Activated T-helper 2 cell treated with anti-CD3 and anti-CD28 coated beads, Interferon-gamma antibody, Interleukin-2, Interleukin-4, amounts not matched to agents 10 μg/mL and 5 μg/mL and 100 μg/mL, durations not matched to agents 14 hours and 24 hours and 36 hours (primary cell): ENCODE measurements at regions of chr7 and their contacts with region 1.

Region 1: GRCh38 chr7:66654123-66654732 is 25.5 kb downstream of the KCTD7 start:
- DNase-seq: peak; percentile 96
- H3K4me3 Mint-ChIP-seq: peak overlapping the region; percentile 95
- H3K27ac Mint-ChIP-seq: peak overlapping the region; percentile 94
- H3K4me1 Mint-ChIP-seq: peaks cover 14% of the 10 kb centered on the region
- H3K27me3 Mint-ChIP-seq: no peaks in the 10 kb centered on the region

Region 2: GRCh38 chr7:66250711-66251110 is 403.5 kb before region 1 on chr7:
- intact Hi-C with region 1: no loop called
- DNase-seq: no peak
- H3K4me3 Mint-ChIP-seq: no peak overlapping the region
- H3K27ac Mint-ChIP-seq: no peak overlapping the region
- H3K4me1 Mint-ChIP-seq: no peaks in the 10 kb centered on the region
- H3K27me3 Mint-ChIP-seq: no peaks in the 10 kb centered on the region

Region 3: DNA sequence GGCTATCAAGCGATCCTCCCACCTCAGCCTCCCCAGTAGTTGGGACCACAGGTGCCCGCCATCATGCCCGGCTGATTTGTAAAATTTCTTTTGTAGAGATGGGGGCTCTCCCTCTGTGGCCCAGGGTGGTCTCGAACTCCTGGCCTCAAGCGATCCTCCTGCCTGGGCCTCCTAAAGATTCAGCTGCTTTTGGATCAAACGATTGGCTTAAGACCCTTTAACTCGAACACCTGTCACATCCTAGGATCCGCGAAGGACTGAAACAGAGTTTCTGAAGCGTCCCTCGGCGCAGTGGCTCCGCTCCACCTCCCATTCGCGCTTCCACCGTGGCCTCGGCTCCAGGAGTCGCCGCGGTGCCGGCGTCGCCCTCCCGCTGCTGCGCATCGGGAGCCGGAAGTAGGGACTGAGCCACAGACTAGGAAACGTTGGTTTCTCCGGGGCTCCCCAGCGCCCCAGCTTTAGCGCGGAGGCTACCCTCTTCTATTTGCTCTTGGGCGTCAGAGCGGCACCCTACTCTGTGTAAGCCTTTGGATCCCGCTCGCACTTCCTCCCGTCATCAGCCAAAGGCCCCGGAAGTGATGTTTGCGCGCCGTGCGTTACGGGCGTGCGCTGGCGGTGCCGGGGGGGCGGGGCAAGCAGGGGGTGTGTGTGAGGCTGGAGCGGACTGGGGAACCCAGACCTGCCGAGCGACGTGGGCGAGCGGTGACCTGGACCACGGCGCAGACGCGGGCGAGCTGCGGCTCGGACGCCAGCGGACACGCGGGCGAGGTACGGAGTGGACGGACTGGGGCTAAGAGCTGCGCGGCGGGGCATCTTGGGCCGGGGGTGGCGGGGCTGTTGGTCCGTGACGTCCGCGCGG is 27.5 kb after region 1 on chr7:
- intact Hi-C with region 1: loop called (anchors 1 kb)
- DNase-seq: peak; percentile 91
- H3K4me3 Mint-ChIP-seq: peak overlapping the region; percentile 90
- H3K27ac Mint-ChIP-seq: peak overlapping the region; percentile 93
- H3K4me1 Mint-ChIP-seq: peaks cover 15% of the 10 kb centered on the region
- H3K27me3 Mint-ChIP-seq: no peaks in the 10 kb centered on the region

Region 4: DNA sequence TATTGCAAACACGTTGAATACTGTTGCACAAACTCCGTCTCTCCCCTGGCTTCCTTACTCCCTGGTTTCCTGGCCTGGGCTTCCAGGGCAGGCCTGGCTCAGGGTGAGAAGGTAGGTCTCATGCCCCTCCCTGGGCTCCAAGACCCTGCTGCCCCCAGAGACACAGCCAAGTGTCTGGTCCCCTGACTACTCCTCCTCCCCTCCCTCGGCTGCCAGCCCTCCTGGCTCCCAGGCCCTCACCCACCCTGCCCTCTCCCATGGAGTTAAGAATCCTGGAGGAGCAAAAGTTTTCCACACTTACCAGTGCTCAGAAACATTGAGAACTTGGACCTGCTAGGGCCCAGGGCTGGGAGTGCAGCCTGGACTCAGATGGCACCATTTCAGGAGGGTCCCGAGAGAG is 39.1 kb after region 1 on chr7:
- intact Hi-C with region 1: no loop called
- DNase-seq: no peak
- H3K4me3 Mint-ChIP-seq: no peak overlapping the region
- H3K27ac Mint-ChIP-seq: no peak overlapping the region
- H3K4me1 Mint-ChIP-seq: no peaks in the 10 kb centered on the region
- H3K27me3 Mint-ChIP-seq: no peaks in the 10 kb centered on the region